ENCODE measurements at regions of chr19 and their contacts with region 1.

Region 1: GRCh38 chr19:48290771-48291488 is 21.0 kb downstream of the ZNF114 start:
- DNase-seq: peak; percentile 69
- H3K4me3 Mint-ChIP-seq: peak overlapping the region; percentile 68
- H3K27ac Mint-ChIP-seq: peak overlapping the region; percentile 37
- H3K4me1 Mint-ChIP-seq: peaks cover 7% of the 10 kb centered on the region
- H3K27me3 Mint-ChIP-seq: peaks cover 25% of the 10 kb centered on the region

Region 2: GRCh38 chr19:48271531-48272151 is 19.3 kb before region 1 on chr19:
- CTCF ChIA-PET with region 1: interaction called, 43 read pairs
- DNase-seq: peak; percentile 38
- H3K4me3 Mint-ChIP-seq: peak overlapping the region; percentile 78
- H3K27ac Mint-ChIP-seq: no peak overlapping the region
- H3K4me1 Mint-ChIP-seq: peaks cover 25% of the 10 kb centered on the region
- H3K27me3 Mint-ChIP-seq: peaks cover 54% of the 10 kb centered on the region

Region 3: DNA sequence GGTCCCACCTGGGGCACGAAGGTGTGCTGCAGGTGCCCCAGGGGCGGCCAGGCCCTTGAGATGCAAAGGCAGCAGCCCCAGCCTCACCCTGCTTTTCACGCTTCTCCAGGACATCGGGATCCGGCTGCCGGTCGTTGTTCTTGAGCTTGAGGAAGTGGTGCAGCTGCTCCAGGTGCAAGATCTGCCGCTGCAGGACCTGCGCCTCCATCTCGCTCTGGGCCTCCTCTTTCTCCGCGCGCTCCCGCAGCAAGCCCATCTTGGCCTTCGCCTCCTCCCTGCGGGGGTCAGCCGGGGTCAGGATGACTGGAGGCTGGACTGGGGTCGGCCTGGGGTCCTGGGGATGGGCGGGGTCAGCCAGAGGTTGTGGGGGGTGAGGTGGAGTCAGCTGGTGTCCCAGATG is 12.9 kb after region 1 on chr19:
- CTCF ChIA-PET with region 1: no interaction called
- DNase-seq: no peak
- H3K4me3 Mint-ChIP-seq: no peak overlapping the region
- H3K27ac Mint-ChIP-seq: no peak overlapping the region
- H3K4me1 Mint-ChIP-seq: no peaks in the 10 kb centered on the region
- H3K27me3 Mint-ChIP-seq: peaks cover 11% of the 10 kb centered on the region